HCT116 (cell line): ENCODE measurements at regions of chr11 and their contacts with region 1.

Region 1: DNA sequence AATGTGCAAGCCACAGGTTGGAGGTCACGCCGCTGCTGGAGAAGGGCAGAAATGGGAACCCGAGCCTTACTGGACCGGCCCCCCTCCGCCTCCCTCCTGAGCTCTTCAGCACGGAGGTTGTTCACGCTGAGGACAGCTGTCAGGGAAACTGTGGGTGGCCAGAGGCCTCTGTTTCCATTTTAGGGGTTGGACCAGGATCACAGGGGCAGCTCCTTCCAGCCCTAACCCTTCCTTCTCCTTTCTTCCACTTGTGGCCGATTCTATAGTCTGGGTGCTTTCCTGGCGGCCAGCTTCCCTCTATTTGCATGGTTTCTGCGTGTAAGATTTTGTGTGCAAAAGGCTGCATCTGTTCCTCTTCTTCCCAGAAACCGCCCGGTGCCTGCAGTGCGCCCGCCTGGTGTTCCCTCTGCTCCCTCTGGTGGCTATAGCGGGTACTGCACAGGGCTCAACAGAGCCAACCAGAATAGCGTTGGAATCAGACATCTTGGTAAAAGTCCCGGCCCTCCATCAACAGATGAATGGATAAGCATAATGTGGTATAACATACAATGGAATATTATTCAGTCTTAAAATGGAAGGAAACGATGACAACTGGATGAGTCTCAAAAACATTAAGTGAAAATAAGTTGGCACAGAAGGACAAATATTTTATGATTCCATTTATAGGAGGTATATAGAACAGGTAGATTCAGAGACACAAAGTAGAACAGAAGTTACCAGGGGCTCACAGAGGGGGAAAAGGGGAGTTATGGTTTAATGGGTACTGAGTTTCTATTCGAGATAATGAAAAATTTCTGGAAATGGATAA is 8.4 kb upstream of the SLC22A8 start:
- DNase-seq: peak; percentile 57
- ATAC-seq: peak; percentile 77
- H3K4me3 ChIP-seq: no peak overlapping the region
- H3K27ac ChIP-seq: no peak overlapping the region
- H3K4me1 ChIP-seq: peaks cover 4 to 13% of the 10 kb centered on the region in 2 experiments; a peak in 3 of 4 replicates
- H3K27me3 ChIP-seq: no peaks in the 10 kb centered on the region
- CTCF ChIP-seq: peak; percentile 96 to 100 (median 100)
- POLR2A ChIP-seq: no peak
- RAD21 ChIP-seq: peak; percentile 97

Region 2: DNA sequence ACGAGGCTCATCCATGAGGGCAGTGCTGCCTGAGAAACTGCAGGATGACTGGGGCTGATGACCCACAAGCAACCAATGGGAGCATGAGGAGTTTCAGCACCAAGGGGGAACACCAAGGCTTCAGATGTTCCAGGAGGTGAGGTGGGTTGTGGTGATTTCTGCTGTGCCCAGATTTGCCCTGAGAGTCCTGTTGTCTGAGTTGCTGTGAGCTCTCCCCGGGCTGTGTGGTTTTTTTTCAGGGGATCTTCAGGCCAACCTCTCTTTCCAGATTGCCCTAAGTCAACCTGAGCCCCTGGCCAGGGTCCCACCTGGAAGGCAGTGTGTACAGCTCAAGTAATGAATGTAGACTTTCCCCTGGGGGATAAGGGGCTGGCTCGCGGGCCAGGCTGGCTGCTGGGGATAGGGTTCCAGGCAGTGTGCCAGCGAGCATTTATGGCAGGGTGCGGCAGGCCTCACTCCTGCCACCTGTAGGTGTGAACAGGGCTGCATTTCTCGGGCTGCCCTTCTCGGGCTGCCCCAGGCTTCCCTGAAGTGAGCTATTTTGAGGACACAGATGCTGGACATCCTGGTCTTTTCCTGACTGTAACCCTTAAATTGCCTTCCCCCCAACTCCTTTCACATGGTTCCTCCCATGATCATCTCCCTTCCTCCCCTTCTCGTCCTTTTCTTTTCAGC is 49.1 kb before region 1 on chr11:
- CTCF ChIA-PET with region 1: interaction called, 40 read pairs
- POLR2A ChIA-PET with region 1: no interaction called
- RAD21 ChIA-PET with region 1: interaction called in 1 of 2 experiments, 3 read pairs
- intact Hi-C with region 1: loop called (anchors 5 kb)
- DNase-seq: peak; percentile 36
- ATAC-seq: peak; percentile 94
- H3K4me3 ChIP-seq: no peak overlapping the region
- H3K27ac ChIP-seq: no peak overlapping the region
- H3K4me1 ChIP-seq: peaks cover 7 to 16% of the 10 kb centered on the region in 2 experiments; a peak in 3 of 4 replicates
- H3K27me3 ChIP-seq: no peaks in the 10 kb centered on the region
- CTCF ChIP-seq: peak; percentile 44 to 82 (median 73); a peak in 5 of 6 replicates
- POLR2A ChIP-seq: no peak
- RAD21 ChIP-seq: peak; percentile 44

Region 3: GRCh38 chr11:62999649-63000048 is 24.4 kb before region 1 on chr11:
- CTCF ChIA-PET with region 1: interaction called, 11 read pairs
- POLR2A ChIA-PET with region 1: no interaction called
- RAD21 ChIA-PET with region 1: no interaction called
- intact Hi-C with region 1: no loop called
- DNase-seq: no peak
- ATAC-seq: no peak
- H3K4me3 ChIP-seq: no peak overlapping the region
- H3K27ac ChIP-seq: no peak overlapping the region
- H3K4me1 ChIP-seq: no peaks in the 10 kb centered on the region
- H3K27me3 ChIP-seq: no peaks in the 10 kb centered on the region; the same call in 1 of the 2 replicates
- CTCF ChIP-seq: no peak
- POLR2A ChIP-seq: no peak
- RAD21 ChIP-seq: no peak

Region 4: DNA sequence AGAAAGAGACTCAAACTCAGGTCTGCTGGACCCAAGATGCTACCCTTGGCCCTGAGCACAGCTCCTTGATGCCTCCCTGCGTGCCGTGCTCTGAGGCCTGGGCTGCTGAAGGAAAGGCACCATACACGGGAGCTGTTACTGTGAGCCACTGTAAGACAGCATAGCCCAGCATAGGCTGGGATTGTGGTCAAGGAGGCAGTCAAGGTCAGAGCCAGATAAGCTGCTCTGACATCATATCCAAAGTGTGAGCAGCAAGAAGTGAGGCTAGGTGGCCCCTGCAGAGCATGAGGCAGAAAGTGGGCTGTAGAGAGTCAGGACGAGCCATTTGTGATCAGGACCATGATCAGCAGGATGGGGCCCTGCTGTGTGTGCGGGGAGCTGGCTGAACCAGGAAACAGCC is 16.1 kb before region 1 on chr11:
- CTCF ChIA-PET with region 1: interaction called, 22 read pairs
- POLR2A ChIA-PET with region 1: interaction called, 3 read pairs
- RAD21 ChIA-PET with region 1: no interaction called
- intact Hi-C with region 1: no loop called
- DNase-seq: no peak
- ATAC-seq: no peak
- H3K4me3 ChIP-seq: no peak overlapping the region
- H3K27ac ChIP-seq: no peak overlapping the region
- H3K4me1 ChIP-seq: no peaks in the 10 kb centered on the region
- H3K27me3 ChIP-seq: no peaks in the 10 kb centered on the region
- CTCF ChIP-seq: no peak
- POLR2A ChIP-seq: no peak
- RAD21 ChIP-seq: no peak